H1 (cell line): ENCODE measurements at regions of chr1 and their contacts with region 1.

Region 1: DNA sequence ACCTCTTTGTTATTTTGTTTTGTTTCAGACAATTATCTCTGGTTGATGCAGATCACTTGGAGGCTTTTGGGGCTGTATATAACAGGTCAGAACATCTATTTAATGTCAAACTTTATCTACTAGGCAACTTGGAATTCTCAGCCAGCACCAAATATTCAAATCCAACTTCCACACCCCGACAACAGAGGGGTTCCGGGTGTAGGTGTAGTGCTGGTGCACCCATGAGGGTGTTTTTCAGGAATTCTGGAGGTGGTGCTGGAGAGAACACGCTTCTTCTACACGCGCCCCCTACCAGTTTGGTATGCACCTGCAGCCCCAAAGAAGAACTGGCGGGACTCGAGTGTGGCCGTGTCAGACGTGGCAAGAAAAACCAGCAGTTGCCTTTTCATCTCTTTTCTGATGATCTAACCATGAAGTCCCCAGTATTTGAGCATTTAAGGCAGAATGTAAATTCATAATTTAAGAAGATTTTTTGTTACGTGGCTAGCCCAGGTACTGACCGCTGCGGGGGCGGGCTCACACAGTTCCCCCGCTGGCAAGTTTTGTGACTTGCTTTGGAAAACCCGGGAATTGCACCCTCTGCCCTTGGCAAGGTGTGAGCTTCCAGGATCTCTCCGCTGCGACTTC is 462 bp upstream of the TLCD4 start:
- DNase-seq: peak in 1 of 2 experiments; percentile 78
- H3K4me3 ChIP-seq: peak overlapping the region; percentile 70 to 86 (median 78)
- H3K27ac ChIP-seq: no peak overlapping the region
- H3K4me1 ChIP-seq: no peaks in the 10 kb centered on the region; a peak in 1 of 7 replicates
- H3K27me3 ChIP-seq: peaks cover 0 to 4% (median 2%) of the 10 kb centered on the region in 4 experiments; a peak in 3 of 7 replicates
- CTCF ChIP-seq: peak; percentile 69 to 76 (median 75)
- EP300 ChIP-seq: 0 out of 3 replicates have a peak, but pooled peaks of 1 of the 2 experiments have one; percentile 34
- POLR2A ChIP-seq: no peak
- RAD21 ChIP-seq: peak; percentile 35 to 62

Region 2: GRCh38 chr1:95095833-95096217 is 20.9 kb before region 1 on chr1:
- CTCF ChIA-PET with region 1: interaction called, 46 read pairs
- POLR2A ChIA-PET with region 1: no interaction called
- DNase-seq: no peak
- H3K4me3 ChIP-seq: no peak overlapping the region
- H3K27ac ChIP-seq: no peak overlapping the region
- H3K4me1 ChIP-seq: no peaks in the 10 kb centered on the region
- H3K27me3 ChIP-seq: no peaks in the 10 kb centered on the region
- CTCF ChIP-seq: no peak
- EP300 ChIP-seq: no peak
- POLR2A ChIP-seq: no peak
- RAD21 ChIP-seq: no peak

Region 3: GRCh38 chr1:95139039-95139438 is 22.3 kb after region 1 on chr1:
- CTCF ChIA-PET with region 1: interaction called, 23 read pairs
- POLR2A ChIA-PET with region 1: interaction called, 3 read pairs
- DNase-seq: no peak
- H3K4me3 ChIP-seq: no peak overlapping the region
- H3K27ac ChIP-seq: no peak overlapping the region
- H3K4me1 ChIP-seq: peaks cover 0 to 3% (median 0%) of the 10 kb centered on the region in 4 experiments; a peak in 1 of 7 replicates
- H3K27me3 ChIP-seq: no peaks in the 10 kb centered on the region
- CTCF ChIP-seq: no peak
- EP300 ChIP-seq: no peak
- POLR2A ChIP-seq: no peak
- RAD21 ChIP-seq: no peak